Activated CD4-positive, alpha-beta memory T cell treated with anti-CD3 and anti-CD28 coated beads for 36 hours (primary cell): ENCODE measurements at regions of chr16 and their contacts with region 1.

Region 1: GRCh38 chr16:1610276-1611017 is 1.4 kb downstream of the IFT140 start:
- DNase-seq: peak; percentile 93
- H3K4me3 Mint-ChIP-seq: peak overlapping the region; percentile 86
- H3K27ac Mint-ChIP-seq: no peak overlapping the region
- H3K4me1 Mint-ChIP-seq: peaks cover 34% of the 10 kb centered on the region
- H3K27me3 Mint-ChIP-seq: no peaks in the 10 kb centered on the region

Region 2: DNA sequence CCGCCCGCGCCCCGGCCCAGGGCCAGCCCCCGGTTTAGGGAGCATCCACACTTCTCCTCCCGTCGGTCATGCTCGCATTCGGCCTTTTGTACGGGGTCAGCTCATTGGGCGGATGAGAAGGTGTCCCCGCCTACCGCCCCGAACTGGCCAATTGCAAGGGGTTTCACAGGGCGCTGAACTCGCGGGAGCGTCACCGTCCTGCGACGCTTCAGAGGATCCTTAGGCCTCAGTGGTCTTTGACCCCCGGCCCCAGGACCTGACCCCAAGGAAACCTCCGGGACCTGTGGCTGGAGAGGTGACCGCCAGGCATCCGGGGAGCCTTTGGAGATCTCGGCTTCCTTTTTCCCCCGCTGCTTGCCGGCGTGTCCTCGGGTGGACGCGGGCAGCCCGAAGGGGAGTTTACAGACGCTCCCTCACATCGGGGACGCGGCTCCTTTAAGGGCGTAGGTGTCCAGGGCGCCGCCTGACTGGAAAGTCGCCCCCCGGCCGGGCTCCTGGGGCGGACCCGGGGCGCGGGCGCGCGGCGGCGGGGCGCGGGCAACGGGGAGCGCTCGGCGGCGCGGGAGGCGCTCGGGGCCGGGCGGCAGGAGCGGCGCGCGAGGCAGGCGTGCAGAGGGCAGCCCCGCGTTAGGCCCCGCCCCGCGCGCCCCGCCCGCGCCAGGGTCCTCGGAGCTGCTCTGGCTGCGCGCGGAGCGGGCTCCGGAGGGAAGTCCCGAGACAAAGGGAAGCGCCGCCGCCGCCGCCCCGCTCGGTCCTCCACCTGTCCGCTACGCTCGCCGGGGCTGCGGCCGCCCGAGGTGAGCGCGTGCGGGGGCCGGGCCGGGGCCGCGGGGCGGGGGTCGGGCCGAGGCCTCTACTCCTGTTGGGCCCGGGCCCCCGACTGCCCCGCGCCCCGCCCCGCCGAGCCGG is 301.2 kb before region 1 on chr16 and contains the start of gene UBE2I:
- CTCF ChIA-PET with region 1: no interaction called
- POLR2A ChIA-PET with region 1: no interaction called
- intact Hi-C with region 1: loop called (anchors 5 kb)
- DNase-seq: peak; percentile 98
- H3K4me3 Mint-ChIP-seq: peak within 1 kb of the TSS; percentile 98
- H3K27ac Mint-ChIP-seq: peak within 1 kb of the TSS; percentile 98
- H3K4me1 Mint-ChIP-seq: peaks cover 37% of the 10 kb centered on the region
- H3K27me3 Mint-ChIP-seq: no peaks in the 10 kb centered on the region
- total RNA-seq, gene UBE2I: 248 to 249 TPM

Region 3: DNA sequence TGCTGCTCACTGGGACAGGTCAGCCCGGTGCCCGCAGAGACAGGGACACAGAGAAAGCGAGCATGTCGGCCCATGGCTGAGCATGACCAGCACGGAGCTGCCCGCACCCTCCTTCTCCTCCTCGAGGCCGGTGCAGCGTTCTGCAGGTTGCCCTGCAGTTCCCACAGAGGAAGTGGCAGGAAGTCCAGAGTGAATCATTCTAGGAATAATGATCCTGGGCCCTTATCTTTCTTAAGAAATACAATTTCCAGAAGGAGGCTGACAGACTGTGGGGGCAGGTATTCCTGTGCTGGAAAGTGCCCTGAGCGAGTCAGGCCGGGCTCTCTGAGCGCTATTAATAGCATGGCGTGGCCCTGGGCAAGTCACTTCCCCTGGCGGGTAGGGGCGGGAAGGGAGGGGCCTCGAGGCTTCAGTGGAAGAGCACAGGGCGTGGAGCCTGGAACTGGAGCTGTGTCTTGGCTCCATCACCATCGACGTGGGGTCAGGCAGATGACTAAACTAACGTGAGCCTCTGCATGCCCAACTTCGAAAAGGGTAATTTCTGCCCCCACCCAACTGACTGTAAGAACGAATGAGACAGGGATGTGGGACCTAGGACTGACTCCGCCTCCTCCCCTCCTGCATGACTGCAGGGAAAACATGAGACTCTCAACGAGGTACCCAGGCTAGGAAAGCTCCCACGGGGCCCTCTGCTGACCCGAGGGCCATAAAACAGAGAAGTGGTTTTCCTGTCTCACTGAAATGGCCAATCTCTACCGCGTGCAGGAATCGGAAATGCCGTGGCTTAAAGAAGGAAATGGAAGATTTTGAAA is 67.2 kb before region 1 on chr16:
- CTCF ChIA-PET with region 1: no interaction called
- POLR2A ChIA-PET with region 1: interaction called, 4 read pairs
- intact Hi-C with region 1: loop called (anchors 5 kb)
- DNase-seq: peak; percentile 84
- H3K4me3 Mint-ChIP-seq: peak overlapping the region; percentile 66
- H3K27ac Mint-ChIP-seq: peak overlapping the region; percentile 95
- H3K4me1 Mint-ChIP-seq: peaks cover 69% of the 10 kb centered on the region
- H3K27me3 Mint-ChIP-seq: no peaks in the 10 kb centered on the region

Region 4: DNA sequence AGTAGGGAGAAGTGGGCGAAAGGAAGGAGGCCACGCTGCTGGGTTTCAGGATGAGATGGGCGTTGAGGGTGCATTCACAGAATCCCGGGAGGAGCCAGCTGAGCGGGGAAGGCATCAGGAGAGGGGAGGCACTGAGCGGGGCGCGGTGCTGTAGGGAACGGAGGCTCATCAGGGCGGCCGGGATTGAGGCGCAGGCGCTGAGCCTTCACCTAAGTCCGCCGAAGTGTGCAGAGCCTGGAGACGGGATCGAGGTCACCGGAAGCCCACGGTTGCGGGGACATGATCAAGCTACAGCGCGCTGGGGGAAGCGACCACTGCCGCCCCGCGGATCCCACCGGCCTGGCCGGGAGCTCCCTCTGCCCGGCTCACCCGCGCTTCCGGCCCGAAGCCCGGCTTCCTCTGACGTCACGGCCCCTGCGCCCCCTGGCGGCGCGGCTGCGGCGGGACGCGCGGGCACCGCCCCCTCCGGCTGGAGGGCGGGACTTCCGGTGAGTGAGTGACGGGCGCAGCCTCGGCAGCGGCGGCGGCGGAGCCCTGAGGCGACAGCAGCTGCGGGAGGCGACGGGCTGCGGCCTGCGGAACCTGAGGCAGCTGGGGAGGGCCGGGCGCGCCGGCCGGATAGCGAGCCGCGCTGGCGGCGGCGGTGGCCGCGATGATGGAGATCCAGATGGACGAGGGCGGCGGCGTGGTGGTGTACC is 95.4 kb after region 1 on chr16 and contains the start of gene MAPK8IP3:
- CTCF ChIA-PET with region 1: interaction called, 8 read pairs
- POLR2A ChIA-PET with region 1: interaction called, 4 read pairs
- intact Hi-C with region 1: loop called (anchors 1 kb)
- DNase-seq: peak; percentile 95
- H3K4me3 Mint-ChIP-seq: peak within 1 kb of the TSS; percentile 96
- H3K27ac Mint-ChIP-seq: peak within 1 kb of the TSS; percentile 92
- H3K4me1 Mint-ChIP-seq: peaks cover 33% of the 10 kb centered on the region
- H3K27me3 Mint-ChIP-seq: no peaks in the 10 kb centered on the region
- total RNA-seq, gene MAPK8IP3: 51.7 to 56.8 TPM

Region 5: DNA sequence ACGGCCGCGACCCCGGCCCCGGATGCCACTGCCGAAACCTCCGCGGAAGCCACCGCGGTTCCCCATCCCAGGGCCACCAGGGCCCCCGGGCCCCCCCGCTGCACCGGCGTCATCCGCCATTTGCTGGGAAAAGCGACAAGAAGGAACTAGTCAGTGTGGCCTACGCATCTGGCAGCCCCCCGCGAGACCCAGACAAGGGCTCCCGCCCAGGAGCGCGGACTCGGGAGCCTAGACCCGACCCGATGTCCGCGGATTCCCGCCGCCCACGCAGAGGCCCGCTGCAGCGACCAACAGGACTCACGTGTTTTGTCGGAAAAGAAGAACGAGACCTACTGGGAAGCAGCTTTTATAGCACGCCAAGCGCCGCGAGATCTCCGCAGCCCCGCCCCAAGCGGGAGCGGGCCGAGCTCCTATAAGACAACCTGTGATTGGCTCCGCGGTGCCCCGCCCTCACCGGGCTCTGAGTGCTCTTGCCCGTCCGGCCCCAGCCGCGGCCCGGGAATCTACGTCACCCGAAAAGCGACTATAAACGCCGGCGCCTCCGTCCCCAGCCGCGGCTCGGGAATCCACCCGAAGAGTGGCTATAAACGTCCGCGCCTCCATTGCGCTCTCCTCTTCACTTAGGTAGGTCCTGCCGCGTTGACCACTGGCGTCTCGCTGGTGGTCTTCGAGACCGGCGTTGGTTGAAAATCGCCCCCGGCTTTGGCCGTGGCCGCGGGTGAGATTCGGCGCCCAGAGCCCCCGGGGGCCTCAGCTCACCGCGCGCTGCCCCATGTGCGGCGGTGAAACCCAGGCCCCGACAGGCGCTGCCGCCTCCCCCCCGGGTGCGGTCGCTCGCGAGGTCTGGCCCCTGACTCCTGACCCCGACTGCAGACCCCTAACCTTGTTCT is 354.3 kb after region 1 on chr16 and contains the start of gene RPS2:
- CTCF ChIA-PET with region 1: no interaction called
- POLR2A ChIA-PET with region 1: no interaction called
- intact Hi-C with region 1: loop called (anchors 5 kb)
- DNase-seq: peak; percentile 99
- H3K4me3 Mint-ChIP-seq: peak within 1 kb of the TSS; percentile 92
- H3K27ac Mint-ChIP-seq: peak within 1 kb of the TSS; percentile 96
- H3K4me1 Mint-ChIP-seq: peaks cover 41% of the 10 kb centered on the region
- H3K27me3 Mint-ChIP-seq: no peaks in the 10 kb centered on the region
- total RNA-seq, gene RPS2: 5,123 to 5,136 TPM